Dendritic cell treated with granulocyte-macrophage colony-stimulating factor and Interleukin-4, amounts not matched to agents 40 ng/mL and 50 ng/mL, for 4 days (primary cell): ENCODE measurements at regions of chr6 and their contacts with region 1.

Region 1: DNA sequence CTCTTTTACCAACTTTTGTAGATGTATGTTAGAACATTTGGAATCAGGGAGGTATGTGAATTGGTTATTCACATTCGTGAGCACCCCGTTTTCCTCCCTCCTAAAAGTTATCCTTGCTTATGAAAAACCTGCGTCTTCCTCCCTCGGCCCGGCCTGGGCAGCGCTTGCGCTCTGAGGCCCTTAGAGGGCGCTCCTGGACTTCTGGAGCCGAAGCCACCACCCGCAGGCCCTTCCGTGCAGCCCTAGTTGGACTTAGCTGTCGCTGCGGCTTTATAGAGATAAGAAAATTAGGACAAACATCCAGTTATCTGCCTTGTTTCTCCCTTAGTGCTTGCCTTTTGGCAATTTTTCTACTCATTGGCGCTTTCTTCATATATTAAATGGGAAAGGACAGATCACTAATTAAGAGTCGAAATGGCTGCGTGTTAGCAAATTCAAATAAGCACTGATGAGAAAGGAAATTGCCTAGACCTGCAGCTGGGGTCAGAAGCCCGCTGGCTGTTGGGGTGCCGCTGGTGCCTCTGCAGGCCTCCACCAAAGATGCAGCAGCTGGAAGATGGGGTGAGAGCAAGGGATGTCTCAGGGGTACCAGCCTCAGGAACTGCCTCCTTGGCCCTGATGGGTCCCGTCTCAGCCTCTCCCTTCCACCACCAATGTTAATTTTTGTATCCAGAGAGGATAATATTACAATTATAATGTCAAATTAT is 5.2 kb downstream of the FNDC1 start:
- H3K4me3 Mint-ChIP-seq: no peak overlapping the region
- H3K27ac Mint-ChIP-seq: no peak overlapping the region
- H3K4me1 Mint-ChIP-seq: peaks cover 23% of the 10 kb centered on the region
- H3K27me3 Mint-ChIP-seq: peaks cover 72% of the 10 kb centered on the region

Region 2: GRCh38 chr6:159252955-159253508 is 78.6 kb after region 1 on chr6:
- intact Hi-C with region 1: no loop called
- H3K4me3 Mint-ChIP-seq: no peak overlapping the region
- H3K27ac Mint-ChIP-seq: no peak overlapping the region
- H3K4me1 Mint-ChIP-seq: no peaks in the 10 kb centered on the region
- H3K27me3 Mint-ChIP-seq: peaks cover 7% of the 10 kb centered on the region

Region 3: DNA sequence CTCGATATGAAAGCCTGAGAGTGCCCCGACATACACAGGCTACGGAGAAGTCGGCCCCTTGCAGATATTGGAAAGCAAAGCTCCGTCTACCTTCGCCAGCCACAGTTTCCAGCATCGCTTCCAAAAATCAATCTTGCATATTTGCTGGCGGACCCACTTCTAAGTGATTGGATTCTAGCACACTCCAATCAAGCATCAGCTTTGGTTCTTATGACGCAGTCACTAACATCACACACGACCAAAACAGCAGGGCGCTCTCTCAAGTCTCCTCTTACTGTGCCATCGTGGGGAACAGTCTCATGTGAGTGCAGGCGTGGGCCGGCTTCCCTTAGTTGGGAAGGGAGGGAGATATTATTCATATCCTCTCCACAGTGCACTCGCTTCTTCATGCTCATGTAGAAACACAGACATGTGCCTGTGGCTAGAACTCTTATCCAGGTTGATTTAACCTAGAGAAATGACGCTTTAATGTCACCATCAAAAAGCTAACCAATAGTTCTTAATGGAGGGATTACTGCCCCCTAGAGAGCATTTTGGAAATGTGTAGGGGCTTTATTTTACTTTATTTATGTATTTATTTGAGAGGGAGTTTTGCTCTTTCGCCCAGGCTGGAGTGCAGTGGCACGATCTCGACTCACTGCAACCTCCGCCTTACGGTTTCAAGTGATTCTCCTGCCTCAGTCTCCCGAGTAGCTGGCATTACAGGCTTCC is 288.9 kb after region 1 on chr6:
- intact Hi-C with region 1: loop called (anchors 5 kb)
- H3K4me3 Mint-ChIP-seq: no peak overlapping the region
- H3K27ac Mint-ChIP-seq: no peak overlapping the region
- H3K4me1 Mint-ChIP-seq: peaks cover 6% of the 10 kb centered on the region
- H3K27me3 Mint-ChIP-seq: peaks cover 3% of the 10 kb centered on the region

Region 4: DNA sequence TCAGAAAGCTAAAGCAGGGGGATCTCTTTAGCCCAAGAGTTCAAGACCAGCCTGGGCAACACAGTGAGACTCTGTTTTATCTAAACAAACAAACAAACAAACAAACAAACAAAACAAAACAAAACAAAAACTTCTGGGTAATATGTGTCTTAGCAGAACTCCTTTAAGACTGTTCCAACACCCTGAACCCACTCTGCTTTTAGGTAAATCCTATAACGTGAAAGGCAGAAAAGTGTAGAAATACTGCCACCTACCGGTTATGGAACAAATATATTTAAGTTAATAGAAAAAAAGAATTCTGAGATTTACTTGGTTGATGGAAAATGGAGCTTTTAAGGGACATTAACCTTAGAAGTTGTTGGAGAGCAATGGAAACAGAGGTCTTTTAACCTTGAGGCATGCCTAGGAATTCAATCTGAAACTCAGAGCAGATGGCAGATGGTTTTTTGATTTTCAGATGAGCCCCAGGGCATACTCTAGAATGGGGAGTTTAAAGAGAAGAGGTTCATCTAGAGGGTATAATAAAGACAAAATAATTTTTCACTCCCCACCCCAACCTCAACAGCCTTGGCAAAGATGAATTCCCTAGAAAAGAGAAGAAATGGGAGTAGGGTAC is 480.2 kb after region 1 on chr6:
- intact Hi-C with region 1: loop called (anchors 1 kb)
- H3K4me3 Mint-ChIP-seq: no peak overlapping the region
- H3K27ac Mint-ChIP-seq: no peak overlapping the region
- H3K4me1 Mint-ChIP-seq: peaks cover 9% of the 10 kb centered on the region
- H3K27me3 Mint-ChIP-seq: no peaks in the 10 kb centered on the region